Activated T-helper 1 cell treated with anti-CD3 and anti-CD28 coated beads, Interleukin-12 subunit alpha, Interleukin-12 subunit beta, Interleukin-2, Interleukin-4 antibody, amounts not matched to agents 30 ng/mL and 10 ng/mL and 1 ng/mL, durations not matched to agents 14 hours and 24 hours and 36 hours (primary cell): ENCODE measurements at regions of chr11 and their contacts with region 1.

Region 1: DNA sequence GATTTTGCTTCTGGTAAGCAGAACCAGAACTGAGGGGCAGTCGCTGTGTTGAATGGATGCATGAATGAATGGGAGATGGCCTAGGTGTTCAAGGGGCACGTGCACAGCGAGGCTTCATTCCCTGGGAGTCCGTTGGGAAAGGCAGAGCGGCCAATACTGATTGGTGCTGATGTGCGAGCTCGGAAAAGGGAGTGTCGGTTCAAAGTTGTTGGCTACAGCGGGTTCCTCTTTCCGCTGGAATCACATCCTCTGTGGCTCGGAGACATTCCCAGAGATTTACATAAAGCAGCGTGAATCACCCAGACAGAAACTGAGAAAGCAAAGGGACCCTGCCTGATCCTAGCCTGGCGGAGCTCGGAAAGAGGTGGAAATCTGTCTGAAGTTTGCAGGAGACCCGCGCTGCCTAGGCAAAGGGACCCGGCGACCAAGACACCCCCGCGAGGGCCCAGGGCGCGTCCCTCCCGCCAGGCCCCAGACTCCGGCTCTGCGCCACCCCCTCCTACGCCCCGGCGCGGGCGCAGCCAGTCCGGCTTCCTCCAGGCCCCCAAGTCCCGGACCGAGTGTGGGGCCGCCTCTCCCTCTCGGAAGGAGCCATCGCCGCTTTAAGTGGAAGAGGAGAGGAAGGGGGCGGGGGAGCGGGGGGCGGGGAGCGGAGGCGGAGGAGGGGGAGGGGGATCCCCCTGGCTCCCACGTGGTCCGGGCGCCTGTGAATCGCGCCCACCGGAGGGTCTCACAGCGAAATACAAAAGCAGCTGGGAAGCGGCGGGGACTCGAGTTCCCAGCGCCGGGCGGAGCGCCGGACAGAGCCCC is at the start of gene FJX1:
- DNase-seq: no peak
- H3K4me3 Mint-ChIP-seq: peak within 1 kb of the TSS; percentile 77
- H3K27ac Mint-ChIP-seq: peak within 1 kb of the TSS; percentile 40
- H3K4me1 Mint-ChIP-seq: peaks cover 7% of the 10 kb centered on the region
- H3K27me3 Mint-ChIP-seq: peaks cover 51% of the 10 kb centered on the region
- total RNA-seq, gene FJX1: 0.34 and 0.73 TPM in 2 replicates

Region 2: DNA sequence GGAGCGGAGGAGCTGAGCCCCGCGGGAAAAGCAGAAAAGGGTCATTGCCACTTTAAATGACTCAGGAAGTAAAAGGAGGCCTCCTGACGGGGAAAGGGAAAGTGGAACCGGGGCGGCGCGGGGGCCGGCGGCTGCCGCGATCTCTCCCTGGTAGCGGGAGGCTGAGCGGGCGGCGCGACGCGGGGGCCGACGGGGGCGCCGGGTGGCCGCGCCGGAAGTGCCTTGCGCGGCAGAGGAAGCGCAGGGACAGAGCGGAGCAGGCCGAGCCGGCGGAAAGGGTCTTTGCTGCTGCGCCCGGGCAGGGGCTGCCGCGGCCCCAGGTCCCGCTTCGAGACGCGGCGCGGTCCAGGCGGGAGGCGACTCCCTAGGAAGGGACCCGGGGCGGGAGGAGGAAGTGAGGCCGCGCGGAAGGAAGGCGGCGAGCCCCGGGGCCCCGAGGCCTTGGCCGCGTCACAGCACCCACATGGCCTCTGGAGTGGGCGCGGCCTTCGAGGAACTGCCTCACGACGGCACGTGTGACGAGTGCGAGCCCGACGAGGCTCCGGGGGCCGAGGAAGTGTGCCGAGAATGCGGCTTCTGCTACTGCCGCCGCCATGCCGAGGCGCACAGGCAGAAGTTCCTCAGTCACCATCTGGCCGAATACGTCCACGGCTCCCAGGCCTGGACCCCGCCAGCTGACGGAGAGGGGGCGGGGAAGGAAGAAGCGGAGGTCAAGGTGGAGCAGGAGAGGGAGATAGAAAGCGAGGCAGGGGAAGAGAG is 44.9 kb after region 1 on chr11 and contains the start of gene TRIM44:
- intact Hi-C with region 1: loop called (anchors 1 kb)
- DNase-seq: peak; percentile 79
- H3K4me3 Mint-ChIP-seq: peak within 1 kb of the TSS; percentile 89
- H3K27ac Mint-ChIP-seq: peak within 1 kb of the TSS; percentile 93
- H3K4me1 Mint-ChIP-seq: peaks cover 33% of the 10 kb centered on the region
- H3K27me3 Mint-ChIP-seq: peaks cover 18% of the 10 kb centered on the region
- total RNA-seq, gene TRIM44: 24.3 and 27.6 TPM in 2 replicates

Region 3: GRCh38 chr11:35943713-35944655 is 326.1 kb after region 1 on chr11 and contains the start of gene LDLRAD3:
- intact Hi-C with region 1: loop called (anchors 5 kb)
- DNase-seq: peak; percentile 8
- H3K4me3 Mint-ChIP-seq: peak within 1 kb of the TSS; percentile 76
- H3K27ac Mint-ChIP-seq: no peak within 1 kb of the TSS
- H3K4me1 Mint-ChIP-seq: peaks cover 6% of the 10 kb centered on the region
- H3K27me3 Mint-ChIP-seq: peaks cover 39% of the 10 kb centered on the region
- total RNA-seq, gene LDLRAD3: 0.57 and 0.76 TPM in 2 replicates

Region 4: GRCh38 chr11:36149538-36150242 is 531.8 kb after region 1 on chr11:
- intact Hi-C with region 1: loop called (anchors 5 kb)
- DNase-seq: peak; percentile 14
- H3K4me3 Mint-ChIP-seq: peak overlapping the region; percentile 12
- H3K27ac Mint-ChIP-seq: no peak overlapping the region
- H3K4me1 Mint-ChIP-seq: peaks cover 14% of the 10 kb centered on the region
- H3K27me3 Mint-ChIP-seq: peaks cover 6% of the 10 kb centered on the region

Region 5: GRCh38 chr11:36265793-36266628 is 648.1 kb after region 1 on chr11:
- intact Hi-C with region 1: loop called (anchors 1 kb)
- DNase-seq: peak; percentile 26
- H3K4me3 Mint-ChIP-seq: no peak overlapping the region
- H3K27ac Mint-ChIP-seq: no peak overlapping the region
- H3K4me1 Mint-ChIP-seq: no peaks in the 10 kb centered on the region
- H3K27me3 Mint-ChIP-seq: peaks cover 20% of the 10 kb centered on the region

Region 6: GRCh38 chr11:36746886-36747710 is 1129.2 kb after region 1 on chr11:
- intact Hi-C with region 1: loop called (anchors 2 kb)
- DNase-seq: peak; percentile 79
- H3K4me3 Mint-ChIP-seq: no peak overlapping the region
- H3K27ac Mint-ChIP-seq: no peak overlapping the region
- H3K4me1 Mint-ChIP-seq: no peaks in the 10 kb centered on the region
- H3K27me3 Mint-ChIP-seq: peaks cover 9% of the 10 kb centered on the region